Activated CD4-positive, alpha-beta memory T cell treated with anti-CD3 and anti-CD28 coated beads for 36 hours (primary cell): ENCODE measurements at regions of chr12 and their contacts with region 1.

Region 1: DNA sequence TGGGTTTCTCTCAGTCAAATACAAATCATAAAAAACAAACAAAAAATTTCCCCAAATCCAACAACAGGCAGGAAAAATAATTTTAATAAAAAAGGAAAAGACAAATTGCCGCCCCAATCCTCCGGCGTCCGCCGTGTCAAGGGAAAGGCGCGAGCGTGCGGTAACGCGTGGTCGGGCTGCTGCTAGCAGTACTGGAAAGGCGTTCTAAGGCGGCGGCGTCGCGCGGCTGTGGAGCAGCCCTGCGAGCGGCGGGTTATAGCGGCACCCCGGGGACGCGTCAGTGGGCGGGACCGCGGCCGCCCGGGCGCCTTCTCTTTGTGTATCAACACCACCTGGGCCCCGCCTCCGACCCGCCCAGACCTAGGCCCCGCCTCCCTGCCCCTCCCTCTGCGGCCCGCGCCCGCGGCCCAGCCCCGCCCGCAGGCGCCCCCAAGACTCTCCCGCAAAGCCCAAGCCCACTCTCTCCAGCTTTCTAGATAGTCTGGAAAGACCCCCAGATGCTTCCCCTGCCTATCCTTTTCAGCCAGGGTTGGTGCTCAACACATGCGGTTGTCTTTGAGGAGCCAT is at the start of gene SLC38A2:
- DNase-seq: peak; percentile 97
- H3K4me3 Mint-ChIP-seq: peak within 1 kb of the TSS; percentile 95
- H3K27ac Mint-ChIP-seq: peak within 1 kb of the TSS; percentile 99
- H3K4me1 Mint-ChIP-seq: peaks cover 54% of the 10 kb centered on the region
- H3K27me3 Mint-ChIP-seq: peaks cover 6% of the 10 kb centered on the region
- total RNA-seq, gene SLC38A2: 173 to 187 TPM

Region 2: GRCh38 chr12:45990468-45991283 is 382.0 kb before region 1 on chr12 and contains the start of gene SCAF11:
- CTCF ChIA-PET with region 1: no interaction called
- POLR2A ChIA-PET with region 1: no interaction called
- intact Hi-C with region 1: loop called (anchors 1 kb)
- DNase-seq: peak; percentile 100
- H3K4me3 Mint-ChIP-seq: peak within 1 kb of the TSS; percentile 97
- H3K27ac Mint-ChIP-seq: peak within 1 kb of the TSS; percentile 99
- H3K4me1 Mint-ChIP-seq: peaks cover 40% of the 10 kb centered on the region
- H3K27me3 Mint-ChIP-seq: peaks cover 3% of the 10 kb centered on the region
- total RNA-seq, gene SCAF11: 114 to 116 TPM

Region 3: DNA sequence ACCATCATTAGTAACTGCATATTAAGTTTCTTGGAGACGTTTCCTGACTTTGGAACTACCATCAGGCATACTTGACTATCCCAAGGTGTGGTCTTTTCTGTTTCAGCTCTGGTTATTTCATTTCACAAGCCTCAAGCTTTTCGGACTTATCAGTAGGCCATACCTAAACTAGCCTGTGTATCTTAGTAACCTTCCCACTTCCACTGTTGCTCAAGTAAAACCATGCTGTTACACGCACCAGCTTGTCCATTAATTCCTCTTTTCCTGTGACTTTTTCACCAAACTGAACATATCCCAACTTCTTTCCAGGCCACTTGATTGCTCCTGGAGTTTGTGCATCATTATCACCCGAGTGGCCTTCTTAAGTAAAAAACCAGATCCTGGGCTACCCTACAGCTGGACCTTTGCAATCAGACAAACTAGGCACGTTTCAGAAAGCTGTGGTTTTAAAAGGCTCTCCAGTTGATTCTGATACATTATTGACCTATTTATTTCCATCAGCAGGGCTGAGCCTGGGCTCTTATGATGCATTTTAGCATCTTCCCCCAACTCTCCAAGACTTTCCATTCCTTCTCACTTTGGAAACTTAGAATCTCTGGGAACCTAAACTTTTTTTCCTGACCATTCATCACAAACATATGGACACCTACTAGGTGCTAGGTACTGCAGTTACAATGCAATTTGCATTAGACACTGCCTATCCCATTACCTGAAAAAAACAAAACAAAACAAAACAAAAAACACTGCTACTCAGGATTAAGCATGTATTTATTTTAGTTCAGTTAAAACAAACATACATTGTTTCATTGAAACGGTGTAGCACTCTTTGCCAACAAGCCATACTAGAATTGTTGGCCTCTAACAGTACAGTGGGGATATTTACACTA is 14.9 kb before region 1 on chr12:
- CTCF ChIA-PET with region 1: interaction called, 3 read pairs
- POLR2A ChIA-PET with region 1: interaction called, 13 read pairs
- intact Hi-C with region 1: no loop called
- DNase-seq: no peak
- H3K4me3 Mint-ChIP-seq: no peak overlapping the region
- H3K27ac Mint-ChIP-seq: no peak overlapping the region
- H3K4me1 Mint-ChIP-seq: peaks cover 32% of the 10 kb centered on the region
- H3K27me3 Mint-ChIP-seq: no peaks in the 10 kb centered on the region

Region 4: GRCh38 chr12:46517579-46517962 is 144.9 kb after region 1 on chr12:
- CTCF ChIA-PET with region 1: no interaction called
- POLR2A ChIA-PET with region 1: no interaction called
- intact Hi-C with region 1: loop called (anchors 1 kb)
- DNase-seq: no peak
- H3K4me3 Mint-ChIP-seq: peak overlapping the region; percentile 21
- H3K27ac Mint-ChIP-seq: peak overlapping the region; percentile 87
- H3K4me1 Mint-ChIP-seq: peaks cover 53% of the 10 kb centered on the region
- H3K27me3 Mint-ChIP-seq: no peaks in the 10 kb centered on the region

Region 5: DNA sequence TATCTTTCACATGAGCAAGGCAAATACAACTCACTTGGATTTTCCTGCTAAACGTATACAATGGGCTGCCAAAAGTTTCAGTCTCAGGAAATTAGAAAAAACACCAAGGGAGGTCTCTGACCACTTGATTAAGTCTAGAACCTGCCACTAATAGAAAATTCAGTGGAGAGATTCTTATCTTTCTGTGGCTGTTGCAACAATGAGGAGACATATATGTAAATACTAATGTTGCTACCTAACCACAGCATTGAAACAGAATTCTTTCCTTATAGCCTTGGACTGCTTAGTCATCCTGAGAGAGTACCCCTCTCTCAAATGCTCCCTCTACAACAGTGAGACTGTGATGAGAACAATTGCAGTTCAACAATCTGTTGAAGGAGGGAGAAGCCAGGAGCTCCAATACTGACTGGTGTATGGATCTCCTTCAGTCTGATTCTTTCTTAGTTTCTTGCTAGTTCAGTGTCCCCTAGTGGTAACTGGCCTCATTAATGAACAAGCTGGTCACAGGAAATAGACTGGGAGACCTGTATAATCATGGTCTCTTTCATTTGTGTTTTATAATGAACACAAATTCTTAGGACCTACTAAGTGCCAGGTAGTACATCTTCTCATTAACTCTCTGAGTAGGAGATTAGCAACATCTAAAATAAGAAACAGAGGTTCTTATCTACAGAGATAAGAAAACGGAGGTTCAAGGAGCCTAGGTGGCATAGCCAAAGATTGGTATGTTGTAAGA is 288.7 kb after region 1 on chr12:
- CTCF ChIA-PET with region 1: interaction called, 7 read pairs
- POLR2A ChIA-PET with region 1: interaction called, 5 read pairs
- intact Hi-C with region 1: loop called (anchors 1 kb)
- DNase-seq: no peak
- H3K4me3 Mint-ChIP-seq: no peak overlapping the region
- H3K27ac Mint-ChIP-seq: no peak overlapping the region
- H3K4me1 Mint-ChIP-seq: peaks cover 34% of the 10 kb centered on the region
- H3K27me3 Mint-ChIP-seq: no peaks in the 10 kb centered on the region

Region 6: DNA sequence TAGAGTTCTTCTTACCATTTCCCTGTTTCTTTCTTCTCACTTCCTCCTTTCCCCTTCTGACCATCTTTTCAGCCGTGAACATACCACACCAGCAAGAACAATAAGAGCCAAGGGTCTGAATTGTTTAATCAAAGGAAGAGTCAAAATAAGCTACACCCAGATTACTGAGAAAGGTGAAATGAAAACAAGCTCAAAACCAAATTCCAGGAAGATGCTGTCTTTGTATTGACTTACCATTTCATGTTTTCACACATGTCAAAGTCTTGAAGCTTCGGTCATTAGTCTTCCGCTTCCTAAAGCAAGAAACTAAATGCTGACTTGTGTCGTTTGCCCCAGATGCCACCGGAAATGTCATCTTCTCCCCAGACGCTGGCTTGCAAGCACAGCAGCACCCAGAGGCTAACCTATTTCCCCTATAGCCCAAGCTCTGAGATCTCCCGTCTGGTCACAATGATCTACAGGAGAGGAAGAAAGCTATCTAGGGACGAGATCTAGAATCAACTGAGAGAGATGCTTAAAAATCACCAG is 843.6 kb after region 1 on chr12:
- CTCF ChIA-PET with region 1: no interaction called
- POLR2A ChIA-PET with region 1: interaction called, 3 read pairs
- intact Hi-C with region 1: loop called (anchors 10 kb)
- DNase-seq: peak; percentile 87
- H3K4me3 Mint-ChIP-seq: peak overlapping the region; percentile 85
- H3K27ac Mint-ChIP-seq: peak overlapping the region; percentile 96
- H3K4me1 Mint-ChIP-seq: peaks cover 19% of the 10 kb centered on the region
- H3K27me3 Mint-ChIP-seq: no peaks in the 10 kb centered on the region

Region 7: GRCh38 chr12:48197971-48198671 is 1825.5 kb after region 1 on chr12:
- CTCF ChIA-PET with region 1: no interaction called
- POLR2A ChIA-PET with region 1: no interaction called
- intact Hi-C with region 1: loop called (anchors 5 kb)
- DNase-seq: peak; percentile 97
- H3K4me3 Mint-ChIP-seq: peak overlapping the region; percentile 86
- H3K27ac Mint-ChIP-seq: peak overlapping the region; percentile 99
- H3K4me1 Mint-ChIP-seq: peaks cover 31% of the 10 kb centered on the region
- H3K27me3 Mint-ChIP-seq: peaks cover 5% of the 10 kb centered on the region